ENCODE measurements at regions of chr4 and their contacts with region 1.

Region 1: GRCh38 chr4:108570993-108571569 is 49.3 kb upstream of the RPL34 start:
- DNase-seq: no peak

Region 2: GRCh38 chr4:108018040-108018883 is 552.8 kb before region 1 on chr4:
- intact Hi-C with region 1: loop called (anchors 5 kb)
- DNase-seq: peak; percentile 84

Region 3: DNA sequence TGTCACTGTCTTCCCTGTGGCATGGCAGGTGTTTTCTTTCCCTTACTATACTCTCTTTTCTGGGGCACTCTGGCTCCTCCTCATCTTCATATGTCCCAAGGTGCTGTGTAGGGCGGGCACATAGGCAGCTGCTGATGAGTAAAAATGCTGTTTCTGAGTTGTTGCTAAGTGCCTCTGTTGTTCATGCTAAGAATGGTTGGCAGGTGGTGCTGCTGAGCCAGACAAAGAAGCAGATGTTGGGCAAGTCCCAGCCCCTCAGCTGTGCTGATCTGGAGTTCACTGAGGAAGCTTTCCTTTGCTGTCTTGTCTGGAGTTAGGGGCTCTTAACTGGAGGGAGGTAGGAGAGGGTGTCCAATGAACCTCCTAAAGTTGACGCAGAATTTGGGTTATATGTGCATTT is 540.7 kb before region 1 on chr4:
- intact Hi-C with region 1: loop called (anchors 5 kb)
- DNase-seq: no peak

Region 4: GRCh38 chr4:108058685-108059440 is 512.2 kb before region 1 on chr4:
- intact Hi-C with region 1: loop called (anchors 5 kb)
- DNase-seq: no peak

Region 5: DNA sequence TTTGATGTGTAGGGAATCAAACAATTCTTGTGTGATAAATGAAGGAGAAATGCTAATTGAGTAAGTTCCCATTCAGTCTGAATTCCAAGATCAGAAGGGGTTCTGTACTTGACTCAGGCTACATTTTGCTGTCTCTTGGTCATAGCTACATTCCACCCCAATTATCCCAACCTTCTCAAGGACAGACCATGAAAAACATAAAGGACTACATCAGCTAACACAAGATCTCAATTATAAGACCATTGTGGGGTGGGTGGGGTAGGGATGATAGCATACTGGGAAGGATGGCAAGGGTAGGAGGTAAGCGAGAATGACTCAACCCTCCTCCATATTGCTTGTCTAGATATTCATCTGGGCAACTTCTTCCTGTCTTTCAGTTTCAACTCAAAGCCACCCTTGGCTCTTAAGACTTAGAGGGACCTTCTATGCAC is 279.2 kb after region 1 on chr4:
- intact Hi-C with region 1: no loop called
- DNase-seq: no peak

Measured in cardiac septum (tissue), 1 donor.